ENCODE measurements at regions of chr12 and their contacts with region 1.

Region 1: DNA sequence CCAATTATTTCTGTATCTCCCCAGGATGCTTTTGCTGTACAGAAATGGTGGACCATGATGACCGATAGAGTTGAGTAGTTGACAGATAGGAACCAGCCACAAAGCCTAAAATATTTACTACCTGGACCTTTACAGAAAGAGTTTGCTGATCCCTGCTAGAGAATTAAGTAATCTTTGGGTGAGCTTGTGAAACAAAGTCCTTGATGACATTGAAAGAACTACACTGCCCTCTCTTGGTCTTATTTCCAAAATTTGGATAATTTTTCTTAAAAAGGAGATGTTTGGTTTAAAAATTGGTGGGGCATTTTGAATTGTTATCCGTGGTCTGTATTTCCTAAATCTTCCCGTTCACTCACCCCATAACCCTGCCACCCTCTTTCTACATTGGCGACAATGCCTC is 13.7 kb upstream of the TCTN1 start:
- DNase-seq: peak in 1 of 35 experiments; percentile 71
- ATAC-seq: peak in 3 of 4 experiments; percentile 44 to 54 (median 46)
- H3K4me3 ChIP-seq: no peak overlapping the region
- H3K4me3 Mint-ChIP-seq: no peak overlapping the region
- H3K27ac ChIP-seq: no peak overlapping the region
- H3K27ac Mint-ChIP-seq: peak overlapping the region; percentile 53 to 54
- H3K4me1 ChIP-seq: peaks cover 0 to 6% of the 10 kb centered on the region in 2 experiments
- H3K4me1 Mint-ChIP-seq: peaks cover 8 to 14% (median 9%) of the 10 kb centered on the region in 3 donors
- H3K27me3 ChIP-seq: no peaks in the 10 kb centered on the region
- H3K27me3 Mint-ChIP-seq: no peaks in the 10 kb centered on the region

Region 2: GRCh38 chr12:110289044-110289710 is 311.1 kb before region 1 on chr12:
- CTCF ChIA-PET with region 1: interaction called in 1 of 2 experiments, 10 read pairs
- POLR2A ChIA-PET with region 1: interaction called in 1 of 2 experiments, 3 read pairs
- DNase-seq: no peak
- ATAC-seq: no peak
- H3K4me3 ChIP-seq: no peak overlapping the region
- H3K4me3 Mint-ChIP-seq: peak overlapping the region in 1 of 3 donors; percentile 9
- H3K27ac ChIP-seq: no peak overlapping the region
- H3K27ac Mint-ChIP-seq: peak overlapping the region; percentile 35 to 70
- H3K4me1 ChIP-seq: peaks cover 11 to 16% of the 10 kb centered on the region in 2 experiments
- H3K4me1 Mint-ChIP-seq: peaks cover 46 to 56% (median 51%) of the 10 kb centered on the region in 3 donors
- H3K27me3 ChIP-seq: no peaks in the 10 kb centered on the region
- H3K27me3 Mint-ChIP-seq: no peaks in the 10 kb centered on the region

Region 3: DNA sequence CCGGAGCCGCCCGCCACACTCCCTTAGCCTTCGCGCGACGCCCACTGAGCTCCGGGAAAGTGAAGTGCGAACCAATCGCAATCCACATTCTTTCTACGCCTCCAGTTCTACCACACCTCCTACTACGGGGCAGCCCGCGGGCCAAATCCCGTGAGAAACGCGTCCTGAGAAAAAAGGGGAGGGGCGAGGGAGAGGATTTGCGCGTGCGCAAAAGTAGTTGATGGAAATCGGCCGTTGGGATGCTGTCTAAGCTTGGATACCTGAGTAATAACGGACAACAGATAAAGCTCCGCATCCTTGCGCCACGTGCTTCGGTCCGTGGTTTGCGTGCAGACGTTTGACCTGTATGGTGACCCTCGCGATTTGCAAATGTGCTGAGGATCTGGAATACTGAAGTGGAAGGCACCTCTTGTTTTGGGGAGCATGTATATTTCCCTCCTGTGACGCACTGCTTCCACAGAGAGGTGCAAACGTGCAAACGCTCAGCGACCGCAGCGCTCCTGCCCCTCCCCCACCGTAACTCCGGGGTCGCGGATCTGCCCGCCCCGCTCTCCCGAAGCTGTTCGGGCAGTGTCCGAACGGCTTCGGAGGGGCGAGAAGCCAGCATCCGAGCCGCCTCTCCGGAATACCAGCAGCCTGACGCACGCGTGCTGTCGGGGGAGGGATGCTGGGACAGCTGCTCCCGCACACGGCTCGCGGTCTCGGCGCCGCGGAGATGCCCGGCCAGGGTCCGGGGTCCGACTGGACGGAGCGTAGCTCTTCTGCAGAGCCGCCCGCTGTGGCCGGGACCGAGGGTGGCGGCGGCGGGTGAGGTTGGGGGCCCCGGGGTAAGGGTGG is 131.8 kb before region 1 on chr12 and contains the starts of genes FAM216A and GPN3:
- CTCF ChIA-PET with region 1: interaction called, 5 to 40 read pairs
- POLR2A ChIA-PET with region 1: interaction called in 1 of 2 experiments, 10 read pairs
- DNase-seq: peak; percentile 90 to 97 (median 93)
- ATAC-seq: peak; percentile 84 to 90 (median 86)
- H3K4me3 ChIP-seq: peak within 1 kb of the TSS; percentile 84 to 91
- H3K4me3 Mint-ChIP-seq: peak within 1 kb of the TSS; percentile 81 to 97 (median 97)
- H3K27ac ChIP-seq: peak within 1 kb of the TSS; percentile 81
- H3K27ac Mint-ChIP-seq: peak within 1 kb of the TSS; percentile 90 to 93
- H3K4me1 ChIP-seq: peaks cover 10 to 26% of the 10 kb centered on the region in 2 experiments
- H3K4me1 Mint-ChIP-seq: peaks cover 30 to 44% (median 41%) of the 10 kb centered on the region in 3 donors
- H3K27me3 ChIP-seq: no peaks in the 10 kb centered on the region
- H3K27me3 Mint-ChIP-seq: no peaks in the 10 kb centered on the region
- total RNA-seq, gene FAM216A: 6.3 to 16.5 (median 13.2) TPM
- total RNA-seq, gene GPN3: 6.3 to 19.1 (median 13.4) TPM

Region 4: DNA sequence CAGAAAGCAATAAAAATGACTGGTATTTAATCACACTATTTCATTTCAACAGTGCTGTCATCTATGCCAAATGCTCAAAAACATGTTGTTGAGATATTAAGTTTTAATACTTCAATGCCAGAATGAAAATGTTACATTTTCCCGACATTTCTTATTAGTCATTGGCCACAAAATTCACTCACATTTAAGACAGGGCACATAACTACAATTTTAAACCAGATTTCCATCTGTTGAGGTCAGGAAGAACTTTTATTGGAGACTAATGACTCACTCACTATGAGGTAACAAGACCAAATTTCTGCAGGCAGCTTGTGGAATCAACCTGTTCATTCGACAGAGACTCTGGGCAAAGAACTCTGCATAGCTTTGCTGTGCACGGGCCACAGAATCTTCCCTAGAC is 53.9 kb before region 1 on chr12:
- CTCF ChIA-PET with region 1: interaction called, 35 to 99 read pairs
- POLR2A ChIA-PET with region 1: interaction called in 1 of 2 experiments, 3 read pairs
- DNase-seq: no peak
- ATAC-seq: no peak
- H3K4me3 ChIP-seq: no peak overlapping the region
- H3K4me3 Mint-ChIP-seq: no peak overlapping the region
- H3K27ac ChIP-seq: no peak overlapping the region
- H3K27ac Mint-ChIP-seq: peak overlapping the region in 1 of 2 donors; percentile 44
- H3K4me1 ChIP-seq: peaks cover 0 to 4% of the 10 kb centered on the region in 2 experiments
- H3K4me1 Mint-ChIP-seq: peaks cover 33 to 50% (median 39%) of the 10 kb centered on the region in 3 donors
- H3K27me3 ChIP-seq: no peaks in the 10 kb centered on the region
- H3K27me3 Mint-ChIP-seq: no peaks in the 10 kb centered on the region

Region 5: GRCh38 chr12:110563702-110564640 is 36.3 kb before region 1 on chr12:
- CTCF ChIA-PET with region 1: interaction called, 9 to 10 read pairs
- POLR2A ChIA-PET with region 1: interaction called, 3 read pairs
- DNase-seq: no peak
- ATAC-seq: no peak
- H3K4me3 ChIP-seq: no peak overlapping the region
- H3K4me3 Mint-ChIP-seq: no peak overlapping the region
- H3K27ac ChIP-seq: peak overlapping the region; percentile 55
- H3K27ac Mint-ChIP-seq: peak overlapping the region; percentile 75 to 88
- H3K4me1 ChIP-seq: peaks cover 28 to 55% of the 10 kb centered on the region in 2 experiments
- H3K4me1 Mint-ChIP-seq: peaks cover 79 to 81% (median 80%) of the 10 kb centered on the region in 3 donors
- H3K27me3 ChIP-seq: no peaks in the 10 kb centered on the region
- H3K27me3 Mint-ChIP-seq: no peaks in the 10 kb centered on the region

Region 6: GRCh38 chr12:110583137-110584059 is 16.9 kb before region 1 on chr12 and contains the start of gene PPTC7:
- CTCF ChIA-PET with region 1: interaction called, 10 to 17 read pairs
- POLR2A ChIA-PET with region 1: no interaction called
- DNase-seq: peak; percentile 90 to 98 (median 96)
- ATAC-seq: peak; percentile 93 to 98 (median 94)
- H3K4me3 ChIP-seq: peak within 1 kb of the TSS; percentile 85 to 96
- H3K4me3 Mint-ChIP-seq: peak within 1 kb of the TSS; percentile 90 to 93 (median 91)
- H3K27ac ChIP-seq: peak within 1 kb of the TSS; percentile 85
- H3K27ac Mint-ChIP-seq: peak within 1 kb of the TSS; percentile 96
- H3K4me1 ChIP-seq: peaks cover 43 to 60% of the 10 kb centered on the region in 2 experiments
- H3K4me1 Mint-ChIP-seq: peaks cover 64 to 66% (median 66%) of the 10 kb centered on the region in 3 donors
- H3K27me3 ChIP-seq: no peaks in the 10 kb centered on the region
- H3K27me3 Mint-ChIP-seq: no peaks in the 10 kb centered on the region
- total RNA-seq, gene PPTC7: 36.0 to 38.1 (median 36.6) TPM